ENCODE measurements at regions of chr19 and their contacts with region 1.

Region 1: GRCh38 chr19:19098703-19099632 is 35.2 kb downstream of the SLC25A42 start:
- DNase-seq: peak; percentile 97
- ATAC-seq: peak; percentile 76
- H3K4me3 ChIP-seq: peak overlapping the region; percentile 36 to 61 (median 51); a peak in 5 of 6 replicates
- H3K27ac ChIP-seq: peak overlapping the region; percentile 99
- H3K4me1 ChIP-seq: peaks cover 98% of the 10 kb centered on the region
- H3K27me3 ChIP-seq: no peaks in the 10 kb centered on the region
- CTCF ChIP-seq: peak; percentile 57
- EP300 ChIP-seq: peak in 1 of 2 experiments; percentile 79; a peak in 2 of 4 replicates
- POLR2A ChIP-seq: peak; percentile 56 to 87
- RAD21 ChIP-seq: no peak; the same call in 1 of the 2 replicates

Region 2: GRCh38 chr19:19110410-19111135 is 11.6 kb after region 1 on chr19:
- CTCF ChIA-PET with region 1: no interaction called
- POLR2A ChIA-PET with region 1: interaction called, 9 read pairs
- in situ Hi-C with region 1: no loop called
- intact Hi-C with region 1: loop called (anchors 2 kb)
- DNase-seq: no peak
- ATAC-seq: no peak
- H3K4me3 ChIP-seq: no peak overlapping the region
- H3K27ac ChIP-seq: no peak overlapping the region
- H3K4me1 ChIP-seq: peaks cover 49% of the 10 kb centered on the region
- H3K27me3 ChIP-seq: no peaks in the 10 kb centered on the region
- CTCF ChIP-seq: no peak
- EP300 ChIP-seq: no peak
- POLR2A ChIP-seq: no peak
- RAD21 ChIP-seq: no peak

Measured in HepG2 (cell line).